ENCODE measurements at regions of chr3 and their contacts with region 1.

Region 1: DNA sequence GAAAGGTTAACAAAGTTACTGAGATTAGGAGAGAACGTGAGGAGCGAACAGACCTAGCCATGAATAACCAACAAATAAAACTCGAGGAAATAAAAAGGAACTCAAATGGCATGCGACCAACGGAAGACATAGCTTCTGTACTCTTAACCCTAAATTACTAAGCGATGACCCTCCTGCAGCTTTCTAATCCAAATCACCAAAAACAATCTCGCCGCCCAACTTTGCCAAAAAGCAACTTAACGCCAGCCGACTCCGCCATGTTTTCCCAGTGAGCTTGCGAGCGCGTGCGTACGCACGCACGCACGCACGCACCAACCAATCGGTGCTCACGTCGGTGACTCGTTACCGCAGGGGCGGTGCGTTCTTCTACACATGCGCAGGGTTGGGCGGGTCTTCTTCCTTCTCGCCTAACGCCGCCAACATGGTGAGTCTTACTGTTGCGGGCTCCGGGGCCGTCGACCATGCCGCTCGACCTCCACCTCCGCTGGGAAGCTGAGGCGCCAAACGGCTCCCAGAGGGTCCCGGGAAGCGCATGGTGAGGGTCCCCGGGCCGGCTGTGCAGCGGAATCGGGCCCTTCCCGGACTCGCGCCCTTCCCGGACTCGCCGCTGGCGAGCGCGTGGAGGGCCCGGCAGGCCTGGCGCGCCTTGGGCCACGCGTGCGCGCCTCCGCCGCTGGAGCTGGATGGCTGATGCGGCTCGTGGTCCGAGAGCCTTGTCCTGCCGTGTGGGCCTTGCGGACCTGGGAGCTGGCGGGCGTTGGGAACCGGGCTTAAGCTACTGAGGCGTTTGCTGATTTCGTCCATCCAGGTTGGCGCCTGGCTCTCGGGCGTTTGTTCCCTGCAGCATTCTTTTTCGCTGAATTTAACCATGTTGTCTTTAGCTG is at the start of gene RPL14:
- DNase-seq: peak; percentile 96 to 98
- H3K4me3 ChIP-seq: peak within 1 kb of the TSS; percentile 79 to 88
- H3K27ac ChIP-seq: peak within 1 kb of the TSS; percentile 83 to 88
- H3K4me1 ChIP-seq: peaks cover 0 to 42% (median 32%) of the 10 kb centered on the region in 4 donors
- H3K27me3 ChIP-seq: no peaks in the 10 kb centered on the region
- CTCF ChIP-seq: no peak

Region 2: DNA sequence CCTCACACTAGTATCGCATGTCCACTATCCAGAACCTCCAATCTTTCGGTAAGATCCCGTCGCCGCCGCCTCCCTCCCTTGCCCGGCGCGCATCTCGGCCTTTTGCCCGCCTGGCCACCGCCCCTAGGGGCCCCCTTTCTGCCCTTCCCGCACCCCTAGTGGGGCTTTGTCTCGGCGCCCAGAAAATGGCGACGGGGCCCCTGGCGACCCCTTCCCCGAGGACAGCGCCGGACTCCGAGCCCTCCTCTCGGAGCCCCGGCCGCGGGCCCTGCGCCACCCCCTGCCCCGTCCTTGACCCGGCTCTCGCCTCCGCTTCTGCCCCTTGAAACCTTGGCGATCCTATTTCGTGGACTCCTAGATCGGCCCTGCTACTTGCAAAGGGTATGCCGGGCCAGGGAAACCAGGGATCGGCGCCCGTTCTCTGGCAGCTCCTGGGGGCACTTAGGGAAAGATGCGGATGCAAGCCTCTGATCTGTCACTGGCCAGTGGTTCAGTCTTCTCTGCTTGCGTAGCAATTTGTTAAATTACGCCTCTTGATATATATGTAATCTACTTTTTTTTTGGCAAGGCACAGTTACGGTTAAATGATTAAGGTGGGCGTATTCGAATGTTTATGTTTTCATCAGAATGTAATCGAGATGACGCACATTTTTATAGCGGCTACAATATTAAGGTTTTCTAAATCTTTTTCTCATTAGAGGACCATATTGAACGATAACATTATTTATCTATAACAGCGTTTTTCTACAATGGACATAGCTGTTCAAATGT is 147.1 kb before region 1 on chr3:
- intact Hi-C with region 1: loop called (anchors 5 kb)
- DNase-seq: peak; percentile 33 to 76
- H3K4me3 ChIP-seq: peak overlapping the region; percentile 88 to 96
- H3K27ac ChIP-seq: peak overlapping the region; percentile 96 to 97
- H3K4me1 ChIP-seq: peaks cover 0 to 41% (median 13%) of the 10 kb centered on the region in 4 donors
- H3K27me3 ChIP-seq: no peaks in the 10 kb centered on the region
- CTCF ChIP-seq: no peak

Region 3: DNA sequence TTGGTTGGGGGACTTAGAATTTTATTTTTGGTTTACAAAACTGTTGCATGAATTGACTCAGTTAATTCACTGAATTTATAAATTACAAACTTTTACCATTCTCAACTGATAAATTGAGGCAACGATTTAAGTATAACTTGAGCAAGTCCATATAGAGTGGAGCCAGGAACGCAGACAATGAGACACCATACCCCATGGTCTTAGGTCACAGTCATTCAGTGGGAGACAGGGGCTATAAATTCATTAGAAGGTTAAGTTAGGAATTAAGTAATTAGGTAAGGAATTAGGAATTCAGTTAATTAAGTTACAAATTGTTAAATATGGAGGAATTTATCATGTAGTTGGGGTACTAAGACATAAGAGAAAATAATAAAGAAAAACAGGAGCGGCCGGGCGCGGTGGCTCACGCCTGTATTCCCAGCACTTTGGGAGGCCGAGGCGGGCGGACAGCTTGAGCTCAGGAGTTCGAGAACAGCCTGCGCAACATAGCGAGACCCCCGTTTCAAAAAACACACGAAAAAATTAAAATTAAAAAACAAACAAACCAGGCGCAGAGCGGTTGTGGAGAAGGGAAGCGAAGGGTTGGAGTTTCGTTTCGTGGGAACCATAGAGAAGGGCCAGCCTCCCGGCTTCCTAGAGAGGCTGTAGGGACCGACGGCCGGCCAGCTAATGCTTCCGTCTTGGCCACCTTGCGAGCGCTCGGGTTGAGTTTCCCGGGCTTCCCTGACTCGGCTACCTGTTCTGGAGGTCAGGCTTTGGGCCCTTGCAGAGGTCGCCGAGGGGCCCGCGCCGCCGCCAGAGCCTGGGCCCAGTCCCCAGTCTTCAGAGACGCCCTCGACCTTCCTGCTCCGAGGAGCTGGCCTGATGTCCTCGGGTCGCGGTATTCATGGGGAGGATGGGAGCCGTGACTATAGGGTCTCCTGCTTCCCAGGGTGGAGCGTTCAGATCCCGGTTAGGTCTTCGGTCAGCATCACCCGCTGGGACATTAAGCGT is 19.6 kb after region 1 on chr3 and contains the start of gene ZNF619:
- intact Hi-C with region 1: loop called (anchors 2 kb)
- DNase-seq: peak; percentile 74 to 83
- H3K4me3 ChIP-seq: peak within 1 kb of the TSS; percentile 66 to 72
- H3K27ac ChIP-seq: peak within 1 kb of the TSS; percentile 71
- H3K4me1 ChIP-seq: peaks cover 0 to 13% (median 5%) of the 10 kb centered on the region in 4 donors
- H3K27me3 ChIP-seq: no peaks in the 10 kb centered on the region
- CTCF ChIP-seq: no peak

Region 4: DNA sequence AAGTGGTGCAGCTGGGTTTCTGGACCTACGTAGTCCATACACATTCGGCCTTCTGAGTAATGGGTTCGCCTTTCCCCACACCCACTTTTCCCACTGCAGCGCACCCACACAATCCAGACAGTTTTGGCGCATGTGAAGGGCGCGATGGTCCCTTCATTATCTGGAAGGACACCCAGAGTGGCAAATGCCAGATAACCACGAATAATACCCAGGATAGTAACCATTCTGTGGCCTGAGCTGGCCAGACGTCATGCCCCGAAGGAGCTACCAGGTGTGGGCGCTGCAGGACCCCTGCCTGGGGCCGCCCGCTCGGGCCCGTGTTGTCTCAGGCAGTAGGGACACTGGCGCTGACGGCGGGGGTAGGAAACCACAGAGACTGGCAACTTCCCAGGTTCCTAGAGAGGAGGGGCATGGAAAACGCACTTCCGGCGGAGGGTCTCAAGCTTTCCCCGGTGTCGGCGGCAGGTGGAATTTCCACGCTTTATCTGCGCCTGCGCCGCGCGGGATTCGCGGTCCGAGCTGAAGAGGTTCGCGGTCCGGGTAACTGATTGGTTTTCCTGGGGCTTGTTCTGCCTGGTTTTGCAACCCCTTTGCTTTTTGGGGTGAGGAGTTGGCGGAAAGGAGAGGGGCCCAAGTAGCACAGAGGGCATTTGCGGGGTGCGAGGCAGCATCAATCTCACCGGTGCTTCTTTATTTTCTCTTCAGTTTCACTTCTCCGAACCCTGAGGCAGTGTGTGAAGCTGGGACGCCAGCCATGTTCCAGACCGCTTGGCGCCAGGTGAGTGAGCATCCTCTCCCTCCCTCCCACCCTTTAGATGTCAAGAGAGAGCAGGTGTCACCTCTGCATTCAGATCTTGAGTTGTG is 48.6 kb after region 1 on chr3 and contains the start of gene ZNF620:
- intact Hi-C with region 1: no loop called
- DNase-seq: peak; percentile 73 to 90
- H3K4me3 ChIP-seq: peak within 1 kb of the TSS; percentile 61
- H3K27ac ChIP-seq: peak within 1 kb of the TSS; percentile 86 to 88
- H3K4me1 ChIP-seq: peaks cover 0 to 23% (median 12%) of the 10 kb centered on the region in 4 donors
- H3K27me3 ChIP-seq: no peaks in the 10 kb centered on the region
- CTCF ChIP-seq: no peak

Region 5: GRCh38 chr3:40524568-40525285 is 67.5 kb after region 1 on chr3 and contains the start of gene ZNF621:
- intact Hi-C with region 1: loop called (anchors 5 kb)
- DNase-seq: peak; percentile 92 to 96
- H3K4me3 ChIP-seq: peak within 1 kb of the TSS; percentile 60 to 94
- H3K27ac ChIP-seq: peak within 1 kb of the TSS; percentile 79 to 90
- H3K4me1 ChIP-seq: peaks cover 0 to 16% (median 7%) of the 10 kb centered on the region in 4 donors
- H3K27me3 ChIP-seq: no peaks in the 10 kb centered on the region
- CTCF ChIP-seq: no peak